Panc1 (cell line): ENCODE measurements at regions of chr4 and their contacts with region 1.

Region 1: GRCh38 chr4:113952452-113953029 is 26.9 kb downstream of the ARSJ start:
- DNase-seq: no peak
- ATAC-seq: peak; percentile 88
- H3K4me3 ChIP-seq: no peak overlapping the region
- H3K27ac ChIP-seq: peak overlapping the region; percentile 99
- H3K4me1 ChIP-seq: peaks cover 51% of the 10 kb centered on the region
- H3K27me3 ChIP-seq: no peaks in the 10 kb centered on the region
- CTCF ChIP-seq: peak; percentile 76

Region 2: GRCh38 chr4:114072781-114073180 is 120.2 kb after region 1 on chr4:
- CTCF ChIA-PET with region 1: no interaction called
- POLR2A ChIA-PET with region 1: no interaction called
- in situ Hi-C with region 1: no loop called
- intact Hi-C with region 1: loop called (anchors 2 kb)
- DNase-seq: no peak
- ATAC-seq: no peak
- H3K4me3 ChIP-seq: no peak overlapping the region
- H3K27ac ChIP-seq: no peak overlapping the region
- H3K4me1 ChIP-seq: no peaks in the 10 kb centered on the region
- H3K27me3 ChIP-seq: no peaks in the 10 kb centered on the region
- CTCF ChIP-seq: no peak

Region 3: DNA sequence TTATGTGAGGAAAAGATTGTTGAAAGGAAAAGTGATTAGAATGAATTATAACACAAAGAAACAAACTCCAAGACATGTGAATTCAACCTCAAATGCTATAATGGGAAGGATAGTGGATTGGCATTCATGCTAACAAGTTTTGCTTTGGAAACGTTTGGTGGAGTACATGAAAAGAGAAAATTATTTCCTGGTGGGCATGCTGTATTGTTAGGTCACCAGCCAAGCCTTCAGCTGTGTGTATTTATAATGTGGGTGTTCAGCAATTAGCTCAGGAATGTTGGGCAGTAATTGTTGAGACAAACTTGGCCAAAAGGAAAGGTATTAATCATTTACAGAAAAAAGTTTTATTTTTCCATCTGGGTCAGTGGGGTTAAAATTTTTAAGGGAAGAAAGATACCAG is 225.9 kb after region 1 on chr4:
- CTCF ChIA-PET with region 1: no interaction called
- POLR2A ChIA-PET with region 1: no interaction called
- in situ Hi-C with region 1: no loop called
- intact Hi-C with region 1: loop called (anchors 10 kb)
- DNase-seq: no peak
- ATAC-seq: no peak
- H3K4me3 ChIP-seq: no peak overlapping the region
- H3K27ac ChIP-seq: no peak overlapping the region
- H3K4me1 ChIP-seq: no peaks in the 10 kb centered on the region
- H3K27me3 ChIP-seq: no peaks in the 10 kb centered on the region
- CTCF ChIP-seq: no peak